ENCODE measurements at regions of chr2 and their contacts with region 1.

Region 1: GRCh38 chr2:44981136-44982108 is 27.8 kb downstream of the SIX2 start:
- DNase-seq: peak; percentile 70
- H3K4me3 ChIP-seq: no peak overlapping the region
- H3K27ac ChIP-seq: no peak overlapping the region
- H3K4me1 ChIP-seq: no peaks in the 10 kb centered on the region
- H3K27me3 ChIP-seq: peaks cover 6 to 9% of the 10 kb centered on the region in 2 experiments
- CTCF ChIP-seq: peak; percentile 70 to 83
- POLR2A ChIP-seq: no peak

Region 2: GRCh38 chr2:44955593-44956392 is 25.6 kb before region 1 on chr2:
- CTCF ChIA-PET with region 1: interaction called, 15 read pairs
- POLR2A ChIA-PET with region 1: no interaction called
- dilution Hi-C with region 1: no loop called
- intact Hi-C with region 1: no loop called
- DNase-seq: peak; percentile 60
- H3K4me3 ChIP-seq: no peak overlapping the region
- H3K27ac ChIP-seq: no peak overlapping the region
- H3K4me1 ChIP-seq: peaks cover 16% of the 10 kb centered on the region
- H3K27me3 ChIP-seq: peaks cover 47 to 52% of the 10 kb centered on the region in 2 experiments
- CTCF ChIP-seq: peak; percentile 86 to 97
- POLR2A ChIP-seq: no peak

Region 3: GRCh38 chr2:45009303-45009927 is 28.0 kb after region 1 on chr2 and contains the start of gene SIX2:
- CTCF ChIA-PET with region 1: interaction called, 26 read pairs
- POLR2A ChIA-PET with region 1: no interaction called
- dilution Hi-C with region 1: no loop called
- intact Hi-C with region 1: loop called (anchors 1 kb)
- DNase-seq: peak; percentile 97
- H3K4me3 ChIP-seq: peak within 1 kb of the TSS; percentile 15 to 48 (median 38)
- H3K27ac ChIP-seq: no peak within 1 kb of the TSS
- H3K4me1 ChIP-seq: peaks cover 26% of the 10 kb centered on the region
- H3K27me3 ChIP-seq: peaks cover 62 to 85% of the 10 kb centered on the region in 2 experiments
- CTCF ChIP-seq: no peak
- POLR2A ChIP-seq: no peak
- total RNA-seq, gene SIX2: 0.24 and 0.32 TPM in 2 replicates

Region 4: DNA sequence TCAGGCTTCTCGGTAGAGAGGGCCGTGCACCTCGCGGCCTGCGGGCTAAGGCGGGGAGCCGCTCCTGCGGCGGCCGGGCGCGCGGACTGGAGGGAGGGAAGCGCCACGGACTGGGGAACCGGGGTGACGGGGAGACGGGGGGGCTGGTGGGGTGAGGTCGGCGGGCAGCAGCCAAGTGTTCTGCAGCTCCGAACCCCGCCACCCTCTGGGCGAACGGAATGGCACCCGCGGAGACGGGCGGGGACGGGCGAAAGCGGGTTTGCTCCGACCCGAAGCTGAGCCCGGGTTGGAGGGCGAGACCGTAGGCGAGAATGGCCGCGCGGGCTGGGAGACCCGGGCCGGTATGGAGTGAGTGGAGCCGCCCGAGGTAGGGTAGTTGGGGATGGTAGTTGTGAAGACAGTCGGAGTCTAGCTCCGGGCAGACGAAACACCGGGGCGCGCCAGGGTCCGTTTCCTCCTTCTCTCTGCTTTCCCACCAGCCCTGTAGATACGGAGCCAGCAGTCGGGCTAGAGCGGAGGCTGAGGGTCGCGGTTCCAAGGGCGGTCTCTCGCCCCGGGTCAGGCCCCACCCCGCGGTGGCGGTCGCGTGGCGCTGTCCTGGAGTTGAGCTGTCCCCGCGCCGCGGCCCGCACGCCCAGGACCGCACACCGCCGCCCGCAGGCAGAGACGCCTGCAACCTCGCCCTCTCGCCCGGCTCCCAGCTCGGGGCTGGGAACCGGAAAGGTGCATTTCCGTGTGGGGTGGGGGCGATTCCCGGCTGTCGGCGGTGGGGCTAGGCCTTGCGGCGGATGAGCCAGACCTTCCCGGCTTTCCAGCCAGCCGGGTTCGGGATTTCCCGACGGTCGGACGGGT is 188.1 kb after region 1 on chr2:
- CTCF ChIA-PET with region 1: interaction called, 24 read pairs
- POLR2A ChIA-PET with region 1: no interaction called
- dilution Hi-C with region 1: no loop called
- intact Hi-C with region 1: no loop called
- DNase-seq: peak; percentile 50
- H3K4me3 ChIP-seq: peak overlapping the region; percentile 61 to 77 (median 64)
- H3K27ac ChIP-seq: no peak overlapping the region
- H3K4me1 ChIP-seq: peaks cover 9% of the 10 kb centered on the region
- H3K27me3 ChIP-seq: peaks cover 5 to 13% of the 10 kb centered on the region in 2 experiments
- CTCF ChIP-seq: no peak
- POLR2A ChIP-seq: peak; percentile 68

Region 5: GRCh38 chr2:45494269-45494977 is 513.0 kb after region 1 on chr2:
- CTCF ChIA-PET with region 1: interaction called, 315 read pairs
- POLR2A ChIA-PET with region 1: no interaction called
- dilution Hi-C with region 1: no loop called
- intact Hi-C with region 1: loop called (anchors 1 kb)
- DNase-seq: peak; percentile 78
- H3K4me3 ChIP-seq: no peak overlapping the region
- H3K27ac ChIP-seq: no peak overlapping the region
- H3K4me1 ChIP-seq: peaks cover 4% of the 10 kb centered on the region
- H3K27me3 ChIP-seq: no peaks in the 10 kb centered on the region
- CTCF ChIP-seq: peak; percentile 45
- POLR2A ChIP-seq: no peak

Region 6: GRCh38 chr2:45578056-45578809 is 596.8 kb after region 1 on chr2:
- CTCF ChIA-PET with region 1: interaction called, 60 read pairs
- POLR2A ChIA-PET with region 1: no interaction called
- dilution Hi-C with region 1: no loop called
- intact Hi-C with region 1: loop called (anchors 1 kb)
- DNase-seq: peak; percentile 67
- H3K4me3 ChIP-seq: no peak overlapping the region
- H3K27ac ChIP-seq: no peak overlapping the region
- H3K4me1 ChIP-seq: no peaks in the 10 kb centered on the region
- H3K27me3 ChIP-seq: no peaks in the 10 kb centered on the region
- CTCF ChIP-seq: peak; percentile 47 to 57
- POLR2A ChIP-seq: no peak

Region 7: DNA sequence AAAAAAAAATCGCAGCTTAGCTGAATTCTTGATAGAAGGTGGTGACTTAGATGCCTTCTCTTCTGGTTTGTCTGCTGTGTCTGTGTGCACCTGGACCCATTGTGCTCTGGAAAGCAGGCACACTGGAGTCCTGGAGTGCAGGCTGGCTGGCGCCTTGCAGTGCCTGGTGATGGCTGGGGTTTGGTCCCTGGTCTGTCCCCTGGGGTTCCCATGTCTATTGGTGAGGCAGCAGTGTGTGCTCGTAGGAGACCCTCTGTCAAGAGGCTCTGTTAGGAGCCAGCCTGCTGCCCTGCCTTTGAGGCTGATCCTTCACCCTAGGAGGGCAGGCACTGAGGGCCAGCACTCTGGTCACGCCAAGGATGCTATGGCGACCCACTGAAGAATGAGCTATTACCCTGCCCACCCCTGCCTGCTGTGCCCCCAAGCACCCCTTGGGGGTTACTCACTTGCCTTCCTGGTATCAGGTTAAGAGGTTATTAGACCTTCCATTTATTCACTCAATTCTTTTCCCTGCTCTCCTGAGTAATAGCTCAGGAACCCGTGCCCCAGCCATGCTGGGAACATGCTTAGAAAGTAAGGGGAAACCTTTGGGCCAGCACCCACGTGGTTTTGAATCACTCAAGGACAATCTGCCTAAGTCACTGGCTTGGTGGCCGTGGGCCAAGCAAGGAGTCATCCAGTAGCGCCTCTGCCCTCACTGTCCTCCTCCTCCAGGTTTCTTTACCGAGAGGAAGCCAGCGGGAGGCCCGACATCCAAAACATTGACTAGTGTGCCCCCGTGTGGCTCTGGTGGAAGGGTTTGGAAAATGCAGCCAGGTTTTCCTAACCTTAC is 954.6 kb after region 1 on chr2:
- CTCF ChIA-PET with region 1: no interaction called
- POLR2A ChIA-PET with region 1: no interaction called
- dilution Hi-C with region 1: no loop called
- intact Hi-C with region 1: loop called (anchors 1 kb)
- DNase-seq: peak; percentile 90
- H3K4me3 ChIP-seq: no peak overlapping the region
- H3K27ac ChIP-seq: peak overlapping the region; percentile 51
- H3K4me1 ChIP-seq: peaks cover 20% of the 10 kb centered on the region
- H3K27me3 ChIP-seq: no peaks in the 10 kb centered on the region
- CTCF ChIP-seq: peak; percentile 73 to 76
- POLR2A ChIP-seq: no peak

Measured in endothelial cell of umbilical vein (primary cell).